Posterior vena cava (tissue), 2 donors: ENCODE measurements at regions of chr4 and their contacts with region 1.

Region 1: DNA sequence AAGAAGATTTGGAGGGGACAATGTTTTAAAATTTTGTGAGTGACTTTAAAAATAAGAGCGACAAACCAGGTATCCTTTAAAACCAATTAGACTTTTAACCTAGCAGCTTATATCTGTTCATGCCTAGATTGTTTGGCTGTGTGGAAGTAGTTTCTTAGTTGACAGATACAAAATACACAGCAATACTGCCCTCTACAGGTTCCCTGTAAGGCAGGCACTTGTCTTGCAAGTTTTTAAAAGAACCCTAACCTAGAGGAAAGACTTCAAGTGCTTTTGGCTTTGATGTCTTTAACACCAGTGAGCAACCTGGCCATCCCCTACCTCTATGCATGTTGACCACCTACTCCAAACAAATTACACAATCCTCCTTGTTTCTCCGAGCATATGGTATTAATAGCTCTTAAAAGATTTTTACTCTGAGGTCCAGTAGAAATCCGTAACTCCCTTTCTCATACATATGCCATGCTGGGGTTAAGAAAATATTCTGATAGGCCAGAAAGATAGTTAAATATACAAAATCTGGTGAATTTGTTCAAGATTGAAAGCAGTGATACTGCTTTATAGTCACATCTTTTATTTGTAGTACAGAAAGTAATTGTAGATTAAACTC is 273.0 kb downstream of the ARHGAP24 start:
- DNase-seq: no peak

Region 2: DNA sequence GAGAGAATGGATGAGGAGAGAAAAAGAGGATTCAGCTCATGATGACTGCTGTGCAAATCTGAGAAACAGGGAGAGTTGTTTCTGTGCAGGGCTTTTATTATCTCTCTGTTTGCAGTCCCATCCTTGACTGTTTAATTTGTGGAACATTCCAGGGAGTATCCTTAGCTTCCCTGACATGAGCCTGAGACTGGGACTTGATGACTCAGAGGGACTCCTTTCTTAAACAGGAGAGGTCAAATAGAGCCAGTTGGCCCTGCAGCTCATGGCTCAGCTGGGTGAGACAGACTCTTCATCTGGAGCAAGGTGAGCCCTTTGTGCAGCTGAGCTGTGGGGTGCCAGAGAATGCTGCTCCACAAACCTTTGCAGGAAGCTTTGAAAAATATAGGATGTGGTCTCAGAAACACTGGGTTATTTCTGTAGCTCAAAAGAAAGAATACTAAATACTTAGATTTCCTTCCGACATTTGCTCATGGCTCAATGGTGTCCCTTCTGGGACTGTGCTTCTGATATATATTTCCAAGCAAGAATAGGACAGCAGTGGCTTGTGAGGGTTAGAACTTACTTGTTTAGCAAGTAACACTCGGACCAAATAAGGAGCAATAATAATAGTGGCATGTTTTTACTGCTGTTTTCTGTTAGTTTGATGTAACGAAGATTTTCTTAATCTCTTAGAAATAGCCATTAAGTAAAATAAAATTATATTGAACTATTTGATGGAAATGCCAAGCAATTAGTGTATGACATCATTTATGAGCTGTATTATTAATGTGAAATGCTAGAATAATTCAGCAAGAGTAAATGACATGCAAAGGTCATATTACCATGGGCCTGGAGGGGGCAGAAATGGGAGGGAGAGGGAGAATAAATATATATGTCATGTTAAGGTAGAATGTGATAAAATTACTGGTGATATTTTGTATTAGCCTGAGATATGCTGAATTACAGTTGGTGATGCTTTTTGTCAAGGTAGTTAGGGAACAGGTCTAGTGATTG is 258.4 kb before region 1 on chr4:
- intact Hi-C with region 1: loop called in 1 of 2 experiments (anchors 5 kb)
- DNase-seq: no peak

Region 3: DNA sequence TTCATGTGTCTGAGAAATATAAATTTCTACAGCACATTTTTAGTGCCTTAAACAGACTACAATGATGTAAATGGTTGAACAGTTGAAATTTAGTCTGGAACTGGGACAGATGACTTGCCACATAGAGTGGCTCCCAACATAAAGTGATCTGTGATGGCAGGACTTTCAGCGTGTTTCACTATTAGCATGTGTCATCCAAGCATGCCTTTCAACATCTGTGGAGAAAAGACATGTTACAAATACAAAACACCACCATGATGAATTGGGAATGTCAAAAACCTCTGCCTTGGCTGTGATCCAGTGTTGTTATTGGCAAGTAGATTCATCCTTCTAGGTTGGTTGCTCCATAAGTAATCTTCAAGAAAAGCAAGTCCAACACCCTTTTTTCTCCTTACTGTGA is 263.1 kb after region 1 on chr4:
- intact Hi-C with region 1: no loop called
- DNase-seq: no peak